Thyroid gland (tissue), 4 donors: ENCODE measurements at regions of chr18 and their contacts with region 1.

Region 1: DNA sequence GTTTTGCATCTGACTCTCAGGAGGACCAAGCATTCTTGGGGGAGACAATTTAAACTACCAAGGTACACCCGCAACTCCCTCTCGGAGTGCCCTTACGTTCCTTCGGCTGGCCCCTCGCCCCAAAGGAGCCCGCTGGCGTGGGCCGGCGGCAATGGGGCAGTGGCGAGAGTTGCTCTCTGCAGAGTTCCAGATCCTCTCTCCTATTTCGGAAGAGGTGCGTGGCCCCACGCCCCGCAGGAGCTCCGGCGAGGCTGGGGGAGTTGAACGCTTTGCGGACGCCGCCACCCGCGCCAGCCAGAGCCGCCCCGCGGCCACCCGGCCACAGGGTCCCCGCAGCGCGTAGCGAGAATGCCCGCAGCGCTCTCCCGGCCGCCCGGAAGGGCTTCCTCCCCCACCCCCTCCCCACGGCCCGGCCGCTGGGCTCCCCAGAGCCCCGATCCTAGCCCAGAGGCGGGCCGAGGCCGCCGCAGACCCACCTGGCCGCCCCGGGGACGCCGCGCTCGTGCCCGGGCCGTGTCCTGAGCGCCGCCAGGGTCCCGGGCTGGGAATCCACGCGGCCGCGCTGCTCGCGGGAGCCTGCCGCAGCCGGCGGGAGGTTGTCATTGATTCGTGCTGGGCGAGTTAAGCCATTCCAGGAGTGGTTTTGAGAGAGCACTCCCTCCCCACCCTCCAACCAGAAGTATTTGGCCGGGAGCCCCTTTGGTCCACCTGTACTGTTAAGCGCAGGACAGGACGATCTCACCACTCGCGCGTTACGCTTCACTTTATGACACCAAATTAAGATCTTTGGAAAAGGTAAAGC is 206.3 kb upstream of the SMAD2 start:
- DNase-seq: peak; percentile 88 to 92
- H3K4me3 ChIP-seq: peak overlapping the region; percentile 27 to 63 (median 60)
- H3K27ac ChIP-seq: peak overlapping the region; percentile 70 to 86 (median 76)
- H3K4me1 ChIP-seq: peaks cover 49 to 76% of the 10 kb centered on the region in 2 donors
- H3K27me3 ChIP-seq: no peaks in the 10 kb centered on the region
- CTCF ChIP-seq: no peak
- POLR2A ChIP-seq: peak in 1 of 2 donors; percentile 69

Region 2: DNA sequence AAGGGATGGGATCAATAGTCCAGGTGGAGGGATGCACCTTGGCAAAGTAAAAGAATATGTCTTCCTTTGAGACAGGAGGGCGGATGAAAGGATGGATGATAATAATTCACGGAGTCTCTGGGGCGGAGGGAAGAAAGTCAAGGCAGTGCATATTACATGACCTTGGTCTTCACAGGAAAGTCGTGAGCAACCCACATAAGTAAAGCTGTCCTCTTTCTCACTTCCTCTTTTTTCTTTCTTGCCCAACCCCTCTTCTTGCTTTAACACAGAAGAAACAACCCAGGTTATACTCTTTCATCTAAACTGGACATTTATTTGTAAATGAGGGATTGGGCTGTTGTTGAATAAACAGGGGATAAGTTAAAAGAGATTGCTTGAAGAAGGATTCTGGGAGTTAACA is 716.6 kb before region 1 on chr18:
- intact Hi-C with region 1: no loop called
- DNase-seq: no peak
- H3K4me3 ChIP-seq: no peak overlapping the region
- H3K27ac ChIP-seq: no peak overlapping the region
- H3K4me1 ChIP-seq: no peaks in the 10 kb centered on the region
- H3K27me3 ChIP-seq: no peaks in the 10 kb centered on the region
- CTCF ChIP-seq: no peak
- POLR2A ChIP-seq: no peak

Region 3: DNA sequence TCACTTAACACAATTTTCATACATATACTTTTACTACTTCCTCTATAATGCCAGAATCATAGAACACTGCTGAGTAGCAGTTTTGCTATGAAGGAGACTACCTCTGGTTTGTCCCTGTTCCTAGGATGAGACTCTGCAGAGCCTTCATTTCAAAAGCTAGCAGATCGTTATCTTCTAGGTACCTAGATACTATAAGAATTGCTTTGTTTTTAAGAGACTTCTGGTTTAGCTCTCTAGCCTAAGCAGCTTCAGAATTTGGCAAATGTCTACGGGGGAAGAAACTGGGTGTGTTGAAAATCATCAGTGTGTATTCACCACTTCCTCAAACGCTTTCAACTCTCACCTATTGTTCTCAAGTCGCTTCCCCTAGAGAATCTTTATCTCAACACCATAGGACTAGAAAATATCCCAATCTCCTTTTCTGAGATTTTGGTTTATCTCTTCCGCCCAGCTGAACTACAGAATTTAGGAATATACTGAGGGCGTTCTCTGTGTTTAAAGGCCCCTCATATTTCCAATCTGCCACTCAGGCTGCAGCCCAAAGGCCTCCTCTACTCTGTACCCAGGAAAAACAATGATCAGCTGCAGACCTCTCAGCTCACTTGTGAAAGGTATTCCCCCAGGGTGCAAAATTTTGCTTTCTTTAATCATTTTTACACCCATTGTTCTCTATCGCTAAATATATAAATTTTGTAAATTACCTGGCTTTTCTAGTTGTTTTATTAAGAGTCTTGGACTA is 234.9 kb before region 1 on chr18:
- intact Hi-C with region 1: no loop called
- DNase-seq: no peak
- H3K4me3 ChIP-seq: no peak overlapping the region
- H3K27ac ChIP-seq: no peak overlapping the region
- H3K4me1 ChIP-seq: peaks cover 4 to 6% of the 10 kb centered on the region in 2 donors
- H3K27me3 ChIP-seq: no peaks in the 10 kb centered on the region
- CTCF ChIP-seq: no peak
- POLR2A ChIP-seq: no peak

Region 4: DNA sequence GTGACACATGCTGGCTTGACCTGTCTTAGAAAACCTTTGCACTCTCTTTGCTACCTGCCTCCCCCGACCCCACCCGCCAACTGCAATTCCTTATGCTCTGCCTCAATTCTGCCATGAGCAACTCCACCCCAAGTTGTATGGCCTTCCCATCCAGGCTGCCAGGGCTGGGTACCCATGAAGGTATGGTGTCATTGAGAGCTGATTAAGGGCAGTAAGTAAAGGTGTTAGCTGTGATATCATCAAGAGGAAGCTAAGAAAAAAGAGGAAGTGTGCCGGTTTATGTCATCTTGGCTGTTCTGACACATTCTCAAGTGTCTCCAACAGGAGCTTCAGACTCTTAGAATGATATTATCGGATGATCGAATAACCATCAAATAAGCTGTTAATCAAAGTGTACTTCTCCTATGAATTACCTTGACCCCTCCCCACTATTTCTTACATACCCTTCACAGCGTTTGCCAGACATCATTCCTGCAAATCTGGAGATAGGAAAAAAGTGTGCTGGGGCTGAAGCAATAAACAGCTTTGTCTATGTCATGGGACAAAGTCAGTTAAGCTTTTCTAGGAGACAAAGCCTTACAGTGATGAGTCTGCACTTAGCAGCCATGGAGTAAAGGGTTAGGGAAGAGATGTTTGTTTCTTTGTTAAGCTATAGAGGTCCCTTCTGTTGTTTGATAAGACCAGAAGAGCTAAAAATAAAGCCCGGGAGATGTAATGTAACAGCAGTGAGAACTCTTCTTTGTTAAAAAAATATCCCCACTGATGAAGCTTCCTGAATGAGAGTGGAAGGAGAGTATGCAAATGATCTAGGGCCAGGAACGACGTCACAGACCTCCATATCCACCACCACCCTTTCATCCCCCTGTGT is 165.8 kb before region 1 on chr18:
- intact Hi-C with region 1: no loop called
- DNase-seq: no peak
- H3K4me3 ChIP-seq: no peak overlapping the region
- H3K27ac ChIP-seq: no peak overlapping the region
- H3K4me1 ChIP-seq: peaks cover 17% of the 10 kb centered on the region in 2 donors
- H3K27me3 ChIP-seq: no peaks in the 10 kb centered on the region
- CTCF ChIP-seq: no peak
- POLR2A ChIP-seq: no peak

Region 5: DNA sequence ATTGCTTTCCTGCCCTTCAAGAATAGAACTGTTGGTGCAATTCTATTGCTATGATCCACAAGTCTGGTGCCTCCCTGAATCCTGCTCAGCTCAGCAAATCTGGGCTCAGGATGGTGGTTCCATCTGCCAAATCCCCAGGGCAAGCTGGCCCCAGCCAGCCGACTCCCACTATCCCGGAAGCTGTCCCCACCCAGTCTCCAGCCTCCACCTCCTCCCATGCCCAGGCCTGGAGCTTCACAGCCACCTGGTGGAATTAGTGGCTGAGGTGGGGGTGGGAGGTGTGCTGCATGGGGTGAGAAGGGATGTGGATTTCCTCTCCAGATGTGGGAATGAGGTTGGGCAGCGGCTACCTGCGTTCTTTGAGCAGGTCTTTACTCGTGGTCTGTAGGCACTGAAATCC is 87.0 kb before region 1 on chr18:
- intact Hi-C with region 1: loop called (anchors 10 kb)
- DNase-seq: peak in 1 of 2 donors; percentile 22
- H3K4me3 ChIP-seq: no peak overlapping the region
- H3K27ac ChIP-seq: peak overlapping the region; percentile 51 to 78 (median 69)
- H3K4me1 ChIP-seq: peaks cover 31 to 50% of the 10 kb centered on the region in 2 donors
- H3K27me3 ChIP-seq: no peaks in the 10 kb centered on the region
- CTCF ChIP-seq: no peak
- POLR2A ChIP-seq: no peak